ENCODE measurements at regions of chr11 and their contacts with region 1.

Region 1: DNA sequence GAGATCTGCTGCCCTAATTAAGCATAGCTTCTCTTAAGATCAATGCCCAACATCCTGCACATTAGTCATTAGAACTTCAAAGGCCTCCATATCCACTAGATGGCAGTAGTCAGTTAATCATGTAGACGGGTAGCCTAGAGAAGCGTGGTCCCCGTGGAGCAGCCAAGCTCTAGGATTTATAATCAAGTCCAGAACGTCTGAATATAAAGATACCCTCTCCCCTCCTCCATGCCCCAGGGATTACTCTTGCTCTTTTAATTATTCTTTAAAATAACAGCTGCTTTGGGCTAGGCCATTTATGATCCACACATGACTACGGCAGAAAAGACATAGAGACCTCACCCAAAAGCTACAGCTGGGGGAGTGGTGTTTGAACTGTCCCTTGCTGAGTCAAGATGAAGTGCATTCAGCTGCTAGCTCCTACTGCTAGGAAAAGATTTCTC is 327.6 kb upstream of the PLET1 start:
- DNase-seq: peak; percentile 55 to 72 (median 58)
- ATAC-seq: peak; percentile 95
- H3K4me3 ChIP-seq: no peak overlapping the region
- H3K27ac ChIP-seq: no peak overlapping the region
- H3K4me1 ChIP-seq: no peaks in the 10 kb centered on the region
- H3K27me3 ChIP-seq: no peaks in the 10 kb centered on the region
- CTCF ChIP-seq: peak; percentile 55 to 72 (median 68)
- EP300 ChIP-seq: no peak
- POLR2A ChIP-seq: no peak
- RAD21 ChIP-seq: peak; percentile 63 to 74

Region 2: DNA sequence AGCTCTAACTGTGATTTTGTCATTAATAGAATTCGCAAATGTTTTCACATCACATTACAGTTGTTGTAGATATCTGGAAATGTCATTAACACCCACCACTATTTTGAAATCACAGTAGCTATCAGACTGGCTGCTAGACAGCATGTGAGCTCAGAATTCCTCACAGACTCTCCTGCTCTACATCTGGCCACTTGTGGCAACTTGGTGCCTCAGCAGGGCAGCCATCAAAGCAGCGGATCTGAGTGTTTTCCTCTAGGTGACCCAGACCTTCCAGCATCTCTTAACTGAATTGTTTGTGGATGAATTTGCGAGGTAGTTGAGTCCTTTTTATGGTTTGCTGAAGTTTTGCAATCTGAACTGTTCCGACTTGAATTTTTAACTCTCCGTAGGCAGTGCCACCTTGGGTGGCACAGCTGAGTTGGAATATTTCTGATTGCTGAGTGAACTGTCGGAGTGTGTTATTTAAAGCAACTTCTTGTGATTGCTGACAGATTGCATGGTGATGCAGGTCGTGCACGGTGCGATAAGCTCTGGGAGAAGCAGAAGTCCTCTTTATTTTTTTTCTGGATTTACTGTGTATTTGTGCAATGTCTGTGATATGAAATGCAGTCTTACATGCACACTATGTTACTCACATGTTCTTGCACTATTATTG is 213.7 kb before region 1 on chr11:
- CTCF ChIA-PET with region 1: no interaction called
- POLR2A ChIA-PET with region 1: no interaction called
- in situ Hi-C with region 1: no loop called
- intact Hi-C with region 1: no loop called
- DNase-seq: no peak
- ATAC-seq: no peak
- H3K4me3 ChIP-seq: no peak overlapping the region
- H3K27ac ChIP-seq: no peak overlapping the region
- H3K4me1 ChIP-seq: no peaks in the 10 kb centered on the region
- H3K27me3 ChIP-seq: peaks cover 11 to 12% of the 10 kb centered on the region in 2 experiments; a peak in 3 of 5 replicates
- CTCF ChIP-seq: no peak
- EP300 ChIP-seq: no peak
- POLR2A ChIP-seq: no peak
- RAD21 ChIP-seq: no peak

Region 3: GRCh38 chr11:113289431-113290187 is 701.3 kb after region 1 on chr11:
- CTCF ChIA-PET with region 1: interaction called, 4 read pairs
- POLR2A ChIA-PET with region 1: no interaction called
- in situ Hi-C with region 1: loop called (anchors 10 kb)
- intact Hi-C with region 1: loop called (anchors 1 kb)
- DNase-seq: peak; percentile 58 to 71 (median 70)
- ATAC-seq: peak; percentile 97
- H3K4me3 ChIP-seq: no peak overlapping the region
- H3K27ac ChIP-seq: no peak overlapping the region
- H3K4me1 ChIP-seq: no peaks in the 10 kb centered on the region
- H3K27me3 ChIP-seq: peaks cover 2 to 46% of the 10 kb centered on the region in 2 experiments
- CTCF ChIP-seq: peak; percentile 85 to 91 (median 89)
- EP300 ChIP-seq: no peak
- POLR2A ChIP-seq: no peak
- RAD21 ChIP-seq: peak; percentile 86 to 91